Left ventricle myocardium superior (tissue), 1 donor: ENCODE measurements at regions of chr7 and their contacts with region 1.

Region 1: GRCh38 chr7:113404245-113404644 is 285.9 kb upstream of the SMIM30 start:
- DNase-seq: no peak
- ATAC-seq: peak; percentile 39

Region 2: DNA sequence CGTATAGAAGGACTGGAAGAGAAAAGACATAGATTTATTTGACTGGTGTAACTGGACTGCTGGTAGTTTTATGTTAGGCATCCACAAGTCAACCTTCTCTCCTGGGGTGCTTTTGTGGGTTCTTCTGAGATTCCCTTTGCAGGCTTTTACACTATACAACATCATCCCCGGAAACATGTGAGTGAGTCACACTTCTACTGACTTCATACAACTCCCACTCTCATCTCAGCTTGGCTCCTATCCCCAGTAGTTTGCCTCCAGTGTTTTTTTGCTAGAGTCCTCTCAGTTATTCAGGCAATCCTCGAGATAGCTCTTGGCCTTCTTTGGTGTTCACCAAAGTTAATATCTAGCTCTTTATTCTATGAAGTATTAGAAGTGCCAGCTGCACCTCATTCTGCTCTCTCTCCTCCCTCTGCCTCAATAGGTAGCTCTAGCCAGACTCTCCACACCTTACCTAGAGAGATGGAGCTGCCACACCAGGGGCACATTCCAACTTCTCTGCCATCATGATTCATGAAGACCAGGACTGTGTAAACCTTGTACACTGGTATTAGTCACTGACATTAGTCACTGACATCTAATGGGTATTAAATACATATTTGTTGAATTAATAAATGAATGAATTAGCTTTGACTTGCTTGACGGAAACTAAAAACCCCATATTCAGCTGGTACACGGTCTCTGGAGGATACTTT is 232.6 kb after region 1 on chr7:
- intact Hi-C with region 1: no loop called
- DNase-seq: no peak
- ATAC-seq: no peak

Region 3: GRCh38 chr7:113698556-113699220 is 294.4 kb after region 1 on chr7:
- intact Hi-C with region 1: loop called (anchors 10 kb)
- DNase-seq: no peak
- ATAC-seq: no peak